ENCODE measurements at regions of chr15 and their contacts with region 1.

Region 1: DNA sequence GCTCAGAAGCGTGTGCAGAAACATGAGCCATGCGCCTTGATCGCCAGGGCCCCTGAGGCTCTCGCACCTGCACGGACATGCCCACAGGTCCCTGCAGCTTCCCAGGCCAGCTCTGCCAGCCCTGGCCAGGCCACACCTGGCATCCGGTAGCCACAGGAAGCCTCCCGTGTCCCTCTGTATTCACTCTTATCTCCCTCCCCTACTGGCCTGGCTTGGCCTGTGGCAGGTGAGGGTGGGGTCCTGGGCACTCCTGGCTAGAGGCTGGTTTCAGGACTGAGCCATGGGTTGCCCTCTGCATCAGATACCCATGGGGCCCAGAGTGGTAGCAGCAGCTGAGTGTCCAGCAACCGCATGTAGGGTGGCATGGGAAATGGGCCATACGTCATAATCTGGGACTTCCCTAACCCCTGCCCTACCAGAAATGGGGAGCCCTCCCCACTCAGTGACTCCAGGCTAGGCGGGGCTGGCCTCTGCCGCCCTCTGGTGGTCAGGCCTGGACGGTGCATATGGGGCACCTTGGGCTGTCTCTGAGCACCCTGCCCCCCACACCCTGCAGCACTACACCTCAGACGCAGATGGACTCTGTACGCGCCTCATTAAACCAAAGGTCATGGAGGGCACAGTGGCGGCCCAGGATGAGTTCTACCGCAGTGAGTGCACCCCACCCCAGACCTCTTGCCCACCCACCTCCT is 12.6 kb upstream of the LMAN1L start:
- DNase-seq: peak; percentile 88
- ATAC-seq: peak; percentile 89
- H3K4me3 Mint-ChIP-seq: peak overlapping the region; percentile 41
- H3K27ac Mint-ChIP-seq: peak overlapping the region; percentile 89
- H3K4me1 Mint-ChIP-seq: peaks cover 64% of the 10 kb centered on the region
- H3K27me3 Mint-ChIP-seq: no peaks in the 10 kb centered on the region
- CTCF ChIP-seq: peak; percentile 67

Region 2: DNA sequence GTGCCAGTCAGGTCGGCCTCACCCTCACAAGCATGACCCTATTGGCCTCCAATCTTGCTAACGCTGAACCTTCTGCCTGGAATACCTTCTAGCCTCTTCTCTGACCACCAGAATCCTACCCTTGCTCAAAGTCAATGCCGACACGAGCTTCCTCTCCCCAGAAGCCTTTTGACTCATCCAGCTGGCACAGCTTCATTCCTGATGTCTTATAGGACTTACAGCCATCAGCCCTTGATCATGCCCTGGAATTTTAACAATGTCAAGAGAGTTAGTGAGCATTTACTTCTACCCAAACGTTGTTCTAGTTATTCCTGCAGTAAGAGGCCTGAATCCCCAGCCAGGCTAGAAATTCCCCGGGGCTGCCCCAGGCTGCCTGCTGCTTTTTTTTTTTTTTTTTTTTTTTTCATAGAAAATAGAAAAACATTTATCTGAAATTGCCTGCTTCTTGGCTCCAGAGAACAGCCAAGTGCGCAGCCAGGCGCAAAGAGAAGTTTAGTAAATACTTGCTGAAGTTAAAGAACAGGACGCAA is 47.4 kb before region 1 on chr15:
- CTCF ChIA-PET with region 1: no interaction called
- POLR2A ChIA-PET with region 1: no interaction called
- intact Hi-C with region 1: no loop called
- DNase-seq: no peak
- ATAC-seq: no peak
- H3K4me3 Mint-ChIP-seq: no peak overlapping the region
- H3K27ac Mint-ChIP-seq: no peak overlapping the region
- H3K4me1 Mint-ChIP-seq: no peaks in the 10 kb centered on the region
- H3K27me3 Mint-ChIP-seq: peaks cover 6% of the 10 kb centered on the region
- CTCF ChIP-seq: no peak

Region 3: DNA sequence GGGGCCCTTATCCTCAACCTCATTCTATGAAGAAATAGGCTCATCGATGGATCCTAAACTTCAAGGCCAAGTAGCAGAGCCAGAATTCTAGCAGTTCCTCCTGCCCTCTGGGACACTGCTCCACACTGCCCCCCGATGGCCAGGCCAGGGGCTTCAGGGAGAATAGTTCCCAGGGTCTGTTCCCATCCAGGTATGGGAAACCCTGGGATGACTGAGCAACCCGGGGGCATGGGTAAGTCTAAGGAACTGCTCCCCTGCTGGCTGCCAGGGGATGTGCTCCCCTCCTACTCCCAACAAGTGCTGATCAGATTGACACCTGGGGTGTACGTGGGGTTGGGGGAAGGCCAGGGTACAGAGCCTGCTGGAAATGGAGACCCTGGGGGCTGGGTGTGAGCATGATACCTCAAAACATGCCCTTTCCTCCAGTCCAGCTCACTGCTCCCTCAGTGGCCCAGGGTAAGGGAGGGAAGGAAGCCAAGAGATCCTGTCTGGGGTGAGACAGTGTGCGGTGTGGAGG is 35.4 kb after region 1 on chr15:
- CTCF ChIA-PET with region 1: no interaction called
- POLR2A ChIA-PET with region 1: no interaction called
- intact Hi-C with region 1: loop called (anchors 2 kb)
- DNase-seq: peak; percentile 47
- ATAC-seq: peak; percentile 71
- H3K4me3 Mint-ChIP-seq: no peak overlapping the region
- H3K27ac Mint-ChIP-seq: no peak overlapping the region
- H3K4me1 Mint-ChIP-seq: peaks cover 11% of the 10 kb centered on the region
- H3K27me3 Mint-ChIP-seq: no peaks in the 10 kb centered on the region
- CTCF ChIP-seq: no peak